PC-9 (cell line): ENCODE measurements at regions of chr21 and their contacts with region 1.

Region 1: GRCh38 chr21:29104239-29104708 is 26.2 kb upstream of the MAP3K7CL start:
- DNase-seq: no peak
- H3K4me3 ChIP-seq: no peak overlapping the region
- H3K27ac ChIP-seq: no peak overlapping the region
- H3K4me1 ChIP-seq: no peaks in the 10 kb centered on the region; the same call in none of the 2 replicates
- H3K27me3 ChIP-seq: no peaks in the 10 kb centered on the region
- CTCF ChIP-seq: no peak

Region 2: DNA sequence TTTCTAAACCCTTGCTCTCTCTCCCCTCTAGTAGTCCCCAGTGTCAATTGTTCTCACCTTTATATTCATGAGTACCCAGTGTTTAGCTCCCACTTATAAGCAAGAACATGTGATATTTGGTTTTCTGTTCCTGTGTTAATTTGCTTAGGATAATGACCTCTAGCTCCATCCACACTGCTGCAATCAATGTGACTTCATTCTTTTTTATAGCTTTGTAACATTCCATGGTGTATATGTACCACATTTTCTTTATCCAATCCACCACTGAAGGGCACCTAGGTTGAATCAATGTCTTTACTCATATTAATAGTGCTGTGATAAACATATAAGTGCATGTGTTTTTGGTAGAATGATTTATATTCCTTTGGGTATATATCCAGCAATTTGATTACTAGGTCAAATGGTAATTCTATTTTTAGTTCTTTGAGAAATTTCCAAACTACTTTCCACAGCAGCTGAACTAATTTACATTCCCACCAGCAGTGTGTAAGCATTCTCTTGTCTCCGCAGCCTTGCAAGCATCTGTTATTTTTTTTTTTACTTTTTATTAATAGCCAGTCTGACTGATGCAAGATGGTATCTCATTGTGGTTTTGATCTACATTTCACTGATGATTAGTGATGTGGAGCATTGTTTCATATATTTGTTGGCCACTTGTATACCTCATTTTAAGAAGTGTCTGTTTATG is 389.4 kb before region 1 on chr21:
- CTCF ChIA-PET with region 1: interaction called, 10 read pairs
- POLR2A ChIA-PET with region 1: no interaction called
- intact Hi-C with region 1: no loop called
- DNase-seq: no peak
- H3K4me3 ChIP-seq: no peak overlapping the region
- H3K27ac ChIP-seq: no peak overlapping the region
- H3K4me1 ChIP-seq: no peaks in the 10 kb centered on the region
- H3K27me3 ChIP-seq: no peaks in the 10 kb centered on the region
- CTCF ChIP-seq: no peak

Region 3: DNA sequence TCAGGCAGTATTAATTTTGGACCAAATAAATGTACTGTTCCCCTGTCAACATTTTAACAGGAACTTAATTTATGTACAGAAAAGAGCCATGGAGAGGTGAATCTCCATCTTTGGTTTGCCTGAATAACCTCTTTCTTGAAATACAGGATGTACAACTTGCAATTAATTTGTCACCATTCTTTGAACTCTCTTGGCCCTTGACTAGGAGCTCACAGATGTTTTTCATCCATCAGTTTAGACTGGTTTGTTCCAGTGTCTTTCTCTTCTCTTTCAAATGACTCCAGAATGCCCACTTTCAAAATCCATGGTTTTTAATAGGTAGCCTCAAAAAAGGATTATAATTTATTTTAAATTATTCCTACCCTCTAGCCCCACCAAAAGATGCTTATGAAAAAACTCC is 31.2 kb after region 1 on chr21:
- CTCF ChIA-PET with region 1: no interaction called
- POLR2A ChIA-PET with region 1: interaction called, 29 read pairs
- intact Hi-C with region 1: no loop called
- DNase-seq: no peak
- H3K4me3 ChIP-seq: no peak overlapping the region
- H3K27ac ChIP-seq: no peak overlapping the region
- H3K4me1 ChIP-seq: no peaks in the 10 kb centered on the region
- H3K27me3 ChIP-seq: no peaks in the 10 kb centered on the region
- CTCF ChIP-seq: no peak

Region 4: GRCh38 chr21:29145837-29146453 is 41.7 kb after region 1 on chr21:
- CTCF ChIA-PET with region 1: no interaction called
- POLR2A ChIA-PET with region 1: no interaction called
- intact Hi-C with region 1: no loop called
- DNase-seq: no peak
- H3K4me3 ChIP-seq: no peak overlapping the region
- H3K27ac ChIP-seq: peak overlapping the region; percentile 42
- H3K4me1 ChIP-seq: peaks cover 15% of the 10 kb centered on the region
- H3K27me3 ChIP-seq: no peaks in the 10 kb centered on the region
- CTCF ChIP-seq: no peak

Region 5: DNA sequence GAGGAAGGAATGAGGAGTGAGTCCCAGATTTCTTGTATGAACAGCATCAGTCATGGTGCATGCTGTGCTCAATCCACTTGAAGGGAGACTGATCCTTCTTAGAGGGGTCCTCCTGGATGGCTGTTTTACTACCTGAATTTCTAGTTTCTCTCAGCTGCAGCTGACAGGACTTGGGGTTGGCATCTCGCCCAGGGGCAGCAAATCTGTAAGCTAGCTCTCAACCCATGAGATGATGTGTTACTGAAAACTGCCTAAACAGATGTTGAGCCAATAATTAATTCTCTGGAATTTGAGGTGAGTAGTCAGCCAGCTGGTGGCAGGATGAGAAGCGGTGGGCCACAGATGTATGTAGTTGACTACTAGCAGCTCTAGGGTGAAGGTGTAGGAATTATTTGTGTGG is 214.1 kb after region 1 on chr21:
- CTCF ChIA-PET with region 1: no interaction called
- POLR2A ChIA-PET with region 1: no interaction called
- intact Hi-C with region 1: no loop called
- DNase-seq: no peak
- H3K4me3 ChIP-seq: no peak overlapping the region
- H3K27ac ChIP-seq: no peak overlapping the region
- H3K4me1 ChIP-seq: 0 out of 2 replicates have a peak, but pooled peaks cover 7% of the 10 kb centered on the region
- H3K27me3 ChIP-seq: no peaks in the 10 kb centered on the region
- CTCF ChIP-seq: no peak

Region 6: DNA sequence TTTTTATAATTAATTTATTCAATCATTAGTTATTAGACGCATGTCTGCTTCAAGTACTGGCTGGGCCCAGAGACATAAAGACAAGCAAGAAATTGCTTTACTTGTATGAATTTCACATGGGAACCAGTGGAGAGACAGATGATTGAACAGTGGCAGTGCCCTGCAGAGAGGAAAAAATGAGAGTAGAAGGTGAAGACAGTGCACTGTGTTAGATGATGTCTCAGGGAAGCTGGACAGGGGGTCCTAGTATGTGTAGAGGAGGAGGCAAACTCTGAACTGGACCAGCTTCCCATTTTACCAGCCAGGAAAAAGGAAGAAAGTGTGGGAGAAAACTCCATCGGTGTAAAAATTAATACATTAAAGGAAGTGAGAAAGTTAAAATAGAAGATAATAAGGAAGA is 320.5 kb after region 1 on chr21:
- CTCF ChIA-PET with region 1: no interaction called
- POLR2A ChIA-PET with region 1: interaction called, 30 read pairs
- intact Hi-C with region 1: no loop called
- DNase-seq: no peak
- H3K4me3 ChIP-seq: no peak overlapping the region
- H3K27ac ChIP-seq: no peak overlapping the region
- H3K4me1 ChIP-seq: peaks cover 11% of the 10 kb centered on the region; the same call in 1 of the 2 replicates
- H3K27me3 ChIP-seq: no peaks in the 10 kb centered on the region
- CTCF ChIP-seq: no peak

Region 7: DNA sequence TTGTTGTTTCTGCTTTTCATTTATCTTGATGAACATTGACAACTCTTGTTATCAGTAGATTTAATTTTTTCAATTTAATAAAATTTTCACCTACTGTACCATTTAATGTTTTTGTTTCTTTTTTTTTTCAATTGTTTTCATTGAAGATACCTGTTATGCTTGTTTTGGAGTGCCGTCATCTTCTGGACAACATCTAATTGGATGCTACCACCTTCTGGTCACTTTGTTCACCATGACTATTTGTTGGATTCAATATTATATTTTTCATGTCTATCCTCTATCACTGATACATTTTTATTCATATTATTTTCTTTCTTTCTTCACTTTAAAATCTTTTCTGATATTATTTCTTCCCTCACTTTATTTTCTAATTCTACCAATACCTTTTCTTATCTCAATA is 1628.8 kb after region 1 on chr21:
- CTCF ChIA-PET with region 1: no interaction called
- POLR2A ChIA-PET with region 1: no interaction called
- intact Hi-C with region 1: no loop called
- DNase-seq: no peak
- H3K4me3 ChIP-seq: no peak overlapping the region
- H3K27ac ChIP-seq: no peak overlapping the region
- H3K4me1 ChIP-seq: no peaks in the 10 kb centered on the region
- H3K27me3 ChIP-seq: no peaks in the 10 kb centered on the region
- CTCF ChIP-seq: no peak